ENCODE measurements at regions of chr12 and their contacts with region 1.

Region 1: GRCh38 chr12:118404876-118405521 is 28.6 kb downstream of the SUDS3 start:
- DNase-seq: peak; percentile 52
- ATAC-seq: peak; percentile 57; the same call in 1 of the 3 replicates
- H3K4me3 ChIP-seq: no peak overlapping the region
- H3K27ac ChIP-seq: no peak overlapping the region
- H3K4me1 ChIP-seq: no peaks in the 10 kb centered on the region
- H3K27me3 ChIP-seq: no peaks in the 10 kb centered on the region
- CTCF ChIP-seq: peak; percentile 79
- EP300 ChIP-seq: no peak
- POLR2A ChIP-seq: no peak
- RAD21 ChIP-seq: peak; percentile 67

Region 2: DNA sequence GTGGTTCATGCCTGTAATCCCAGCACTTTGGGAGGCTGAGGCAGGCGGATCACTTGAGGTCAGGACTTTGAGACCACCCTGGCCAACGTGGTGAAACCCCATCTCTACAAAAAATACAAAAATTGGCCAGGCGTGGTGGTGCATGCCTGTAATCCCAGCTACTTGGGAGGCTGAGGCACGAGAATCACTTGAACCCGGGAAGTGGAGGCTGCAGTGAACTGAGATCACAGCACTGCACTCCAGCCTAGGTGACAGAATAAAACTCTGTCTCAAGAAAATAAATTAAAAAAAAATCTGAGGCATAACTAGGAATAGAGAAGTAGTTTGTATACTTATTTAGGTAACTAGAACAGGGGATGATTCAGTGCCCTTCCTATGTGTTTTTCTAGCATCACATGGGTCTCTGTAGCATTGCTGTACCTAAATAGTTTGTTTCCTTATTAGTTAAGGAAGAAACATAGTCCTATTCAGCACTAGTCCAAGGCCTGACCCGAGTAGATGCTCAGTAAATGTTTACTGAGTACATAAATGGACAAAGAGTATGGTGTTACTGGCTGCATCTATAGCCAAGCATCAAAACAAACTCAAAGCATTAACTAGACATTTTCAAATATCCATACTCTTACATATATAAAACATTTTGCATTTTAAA is 54.0 kb before region 1 on chr12:
- CTCF ChIA-PET with region 1: no interaction called
- POLR2A ChIA-PET with region 1: no interaction called
- in situ Hi-C with region 1: no loop called
- intact Hi-C with region 1: loop called (anchors 2 kb)
- DNase-seq: peak; percentile 49
- ATAC-seq: peak; percentile 87
- H3K4me3 ChIP-seq: no peak overlapping the region
- H3K27ac ChIP-seq: no peak overlapping the region
- H3K4me1 ChIP-seq: peaks cover 38% of the 10 kb centered on the region
- H3K27me3 ChIP-seq: no peaks in the 10 kb centered on the region
- CTCF ChIP-seq: no peak
- EP300 ChIP-seq: no peak
- POLR2A ChIP-seq: no peak
- RAD21 ChIP-seq: no peak

Region 3: GRCh38 chr12:118625050-118625675 is 220.2 kb after region 1 on chr12:
- CTCF ChIA-PET with region 1: interaction called, 33 read pairs
- POLR2A ChIA-PET with region 1: no interaction called
- in situ Hi-C with region 1: loop called (anchors 5 kb)
- intact Hi-C with region 1: loop called (anchors 1 kb)
- DNase-seq: no peak
- ATAC-seq: no peak
- H3K4me3 ChIP-seq: no peak overlapping the region
- H3K27ac ChIP-seq: no peak overlapping the region
- H3K4me1 ChIP-seq: no peaks in the 10 kb centered on the region
- H3K27me3 ChIP-seq: no peaks in the 10 kb centered on the region; a peak in 1 of 5 replicates
- CTCF ChIP-seq: no peak
- EP300 ChIP-seq: no peak
- POLR2A ChIP-seq: no peak
- RAD21 ChIP-seq: no peak

Region 4: DNA sequence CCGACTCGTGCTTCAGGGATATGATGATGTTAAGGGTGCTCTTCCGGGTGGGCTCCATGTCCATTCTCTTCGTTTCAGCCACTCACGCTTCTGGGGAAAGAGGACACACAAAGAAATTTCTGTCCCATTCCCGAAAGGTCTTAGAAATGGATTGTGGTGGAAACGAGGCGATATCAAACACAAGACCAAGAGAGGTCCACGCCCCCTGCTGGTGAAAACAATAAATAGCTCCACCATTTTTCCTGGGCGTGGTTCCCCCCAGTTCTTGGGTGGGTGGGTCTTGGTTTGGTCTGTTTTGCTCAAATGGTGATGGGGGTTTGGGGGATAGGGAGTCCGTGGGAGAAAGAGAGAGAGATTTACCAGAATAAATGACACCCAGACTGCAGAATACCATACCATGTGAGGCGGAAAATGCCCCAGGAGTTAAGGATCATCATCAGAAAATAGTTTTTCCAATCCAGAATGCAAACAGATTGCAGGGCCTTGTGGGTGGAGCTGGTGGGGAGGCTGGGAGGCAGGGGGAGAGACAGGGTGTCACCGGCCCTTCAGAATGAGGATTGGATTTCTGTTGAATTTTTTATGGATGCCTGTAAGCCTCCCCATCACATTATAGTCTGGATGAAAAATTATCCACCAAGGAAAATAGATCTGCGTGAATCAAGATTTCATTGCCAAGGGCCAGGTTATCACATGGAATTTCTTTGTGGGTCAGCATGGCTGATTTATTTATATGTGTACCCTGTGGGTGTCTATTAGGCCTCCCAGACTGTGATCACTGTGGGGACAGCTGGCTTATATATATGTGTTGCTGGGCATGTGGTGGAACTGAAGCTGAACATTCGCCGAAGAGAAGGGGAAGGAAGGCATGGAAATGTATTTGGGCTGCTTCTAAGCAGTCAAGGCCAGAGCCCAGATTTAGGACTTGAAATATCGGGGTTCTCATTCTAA is 632.2 kb after region 1 on chr12:
- CTCF ChIA-PET with region 1: no interaction called
- POLR2A ChIA-PET with region 1: no interaction called
- in situ Hi-C with region 1: loop called (anchors 25 kb)
- intact Hi-C with region 1: no loop called
- DNase-seq: peak; percentile 16
- ATAC-seq: no peak
- H3K4me3 ChIP-seq: no peak overlapping the region
- H3K27ac ChIP-seq: no peak overlapping the region
- H3K4me1 ChIP-seq: no peaks in the 10 kb centered on the region
- H3K27me3 ChIP-seq: no peaks in the 10 kb centered on the region
- CTCF ChIP-seq: peak; percentile 67
- EP300 ChIP-seq: no peak
- POLR2A ChIP-seq: no peak
- RAD21 ChIP-seq: no peak

Measured in HepG2 (cell line).